CD4-positive, alpha-beta T cell (primary cell): ENCODE measurements at regions of chr11 and their contacts with region 1.

Region 1: GRCh38 chr11:62427630-62428233 is 8.9 kb downstream of the SCGB1A1 start:
- DNase-seq: peak in 3 of 14 experiments; percentile 22 to 56 (median 48)
- ATAC-seq: no peak
- H3K4me3 ChIP-seq: no peak overlapping the region
- H3K4me3 Mint-ChIP-seq: peak overlapping the region; percentile 38
- H3K27ac ChIP-seq: peak overlapping the region in 1 of 2 donors; percentile 24
- H3K27ac Mint-ChIP-seq: peak overlapping the region; percentile 35
- H3K4me1 ChIP-seq: peaks cover 34% of the 10 kb centered on the region
- H3K4me1 Mint-ChIP-seq: peaks cover 33% of the 10 kb centered on the region
- H3K27me3 ChIP-seq: no peaks in the 10 kb centered on the region
- H3K27me3 Mint-ChIP-seq: no peaks in the 10 kb centered on the region
- CTCF ChIP-seq: no peak

Region 2: DNA sequence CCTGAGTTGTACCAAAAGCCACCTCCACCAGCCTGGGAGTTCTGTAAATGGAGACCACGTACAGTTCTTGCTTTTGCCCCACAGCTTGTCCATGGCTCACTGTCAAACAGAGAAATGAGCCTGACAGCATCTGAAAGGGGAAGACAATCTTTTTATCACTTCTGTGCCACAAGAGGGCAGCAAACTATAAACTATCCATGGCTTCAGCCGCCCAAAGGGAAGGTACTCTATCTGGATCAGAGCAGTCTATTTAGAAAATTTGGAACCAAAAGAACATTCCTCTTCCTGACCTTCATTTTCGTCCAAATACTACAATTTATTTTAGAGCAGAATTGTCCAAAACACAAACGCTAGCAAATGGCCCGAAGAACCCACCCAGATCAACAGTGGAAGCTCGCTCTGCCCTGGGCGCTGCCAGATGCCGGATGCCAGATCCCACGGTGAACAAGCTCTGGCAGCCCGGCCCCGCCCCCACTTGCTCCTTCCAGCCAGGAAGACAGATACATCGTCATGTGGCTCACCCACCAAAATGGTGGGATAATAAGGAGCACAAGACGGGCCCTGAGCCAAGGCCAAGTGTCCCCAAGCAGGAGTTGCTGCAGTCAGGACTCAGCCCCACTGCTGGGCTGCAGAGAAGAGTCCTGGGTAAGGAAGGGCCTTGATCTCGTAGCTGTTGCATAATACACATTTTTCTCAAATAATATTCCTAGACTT is 32.8 kb before region 1 on chr11:
- CTCF ChIA-PET with region 1: interaction called, 16 read pairs
- POLR2A ChIA-PET with region 1: no interaction called
- intact Hi-C with region 1: no loop called
- DNase-seq: peak in 8 of 14 experiments; percentile 13 to 84 (median 53)
- ATAC-seq: peak; percentile 78
- H3K4me3 ChIP-seq: no peak overlapping the region
- H3K4me3 Mint-ChIP-seq: no peak overlapping the region
- H3K27ac ChIP-seq: no peak overlapping the region
- H3K27ac Mint-ChIP-seq: no peak overlapping the region
- H3K4me1 ChIP-seq: peaks cover 10% of the 10 kb centered on the region
- H3K4me1 Mint-ChIP-seq: peaks cover 18% of the 10 kb centered on the region
- H3K27me3 ChIP-seq: no peaks in the 10 kb centered on the region
- H3K27me3 Mint-ChIP-seq: no peaks in the 10 kb centered on the region
- CTCF ChIP-seq: peak; percentile 81

Region 3: DNA sequence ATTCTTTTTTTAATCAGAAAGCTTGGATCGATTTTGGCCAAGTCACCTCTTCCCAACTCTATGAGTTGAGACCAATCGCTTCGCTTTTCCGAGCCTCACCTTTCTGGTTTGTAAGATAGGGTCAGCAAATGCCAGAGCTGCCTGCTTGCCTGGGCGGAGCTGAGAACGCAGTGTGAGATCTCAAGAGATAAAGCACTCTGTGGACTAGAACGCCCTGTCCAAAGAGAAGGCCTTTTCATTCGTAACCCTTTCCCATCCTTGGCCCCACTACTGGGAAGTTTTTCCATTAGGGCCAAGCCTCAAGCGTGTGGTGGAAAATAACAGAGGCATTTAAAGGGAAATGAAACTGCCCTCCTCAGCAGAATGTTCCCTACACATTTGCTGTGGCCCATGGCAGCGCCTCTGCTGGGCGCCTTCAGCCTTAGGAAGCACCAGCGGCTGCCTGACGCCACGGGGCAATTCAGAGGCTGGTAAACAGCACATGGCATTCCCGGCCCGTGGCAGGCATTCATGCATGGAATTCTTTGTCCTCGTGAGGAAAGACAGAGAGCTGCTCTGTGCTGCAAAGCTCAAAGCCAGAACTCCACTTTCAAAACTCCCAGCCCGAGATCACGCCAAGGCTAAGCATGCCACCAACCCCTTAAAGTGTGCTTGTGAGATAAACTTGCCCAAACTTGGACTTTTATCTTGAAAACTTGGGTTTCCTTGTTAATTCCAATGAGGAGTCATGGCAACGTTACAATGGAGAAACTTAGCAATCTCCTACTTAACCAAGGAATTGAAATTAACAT is 80.7 kb after region 1 on chr11:
- CTCF ChIA-PET with region 1: interaction called, 12 read pairs
- POLR2A ChIA-PET with region 1: no interaction called
- intact Hi-C with region 1: no loop called
- DNase-seq: peak in 2 of 14 experiments; percentile 53 to 54
- ATAC-seq: no peak
- H3K4me3 ChIP-seq: no peak overlapping the region
- H3K4me3 Mint-ChIP-seq: no peak overlapping the region
- H3K27ac ChIP-seq: no peak overlapping the region
- H3K27ac Mint-ChIP-seq: no peak overlapping the region
- H3K4me1 ChIP-seq: no peaks in the 10 kb centered on the region
- H3K4me1 Mint-ChIP-seq: no peaks in the 10 kb centered on the region
- H3K27me3 ChIP-seq: no peaks in the 10 kb centered on the region
- H3K27me3 Mint-ChIP-seq: peaks cover 8% of the 10 kb centered on the region
- CTCF ChIP-seq: no peak

Region 4: GRCh38 chr11:62556108-62556871 is 128.6 kb after region 1 on chr11:
- CTCF ChIA-PET with region 1: interaction called, 92 read pairs
- POLR2A ChIA-PET with region 1: interaction called, 18 read pairs
- intact Hi-C with region 1: loop called (anchors 1 kb)
- DNase-seq: peak; percentile 72 to 94 (median 83)
- ATAC-seq: peak; percentile 46
- H3K4me3 ChIP-seq: peak overlapping the region; percentile 49
- H3K4me3 Mint-ChIP-seq: peak overlapping the region; percentile 84
- H3K27ac ChIP-seq: peak overlapping the region; percentile 96 to 97
- H3K27ac Mint-ChIP-seq: peak overlapping the region; percentile 95
- H3K4me1 ChIP-seq: peaks cover 95% of the 10 kb centered on the region
- H3K4me1 Mint-ChIP-seq: peaks cover 84% of the 10 kb centered on the region
- H3K27me3 ChIP-seq: no peaks in the 10 kb centered on the region
- H3K27me3 Mint-ChIP-seq: no peaks in the 10 kb centered on the region
- CTCF ChIP-seq: no peak

Region 5: DNA sequence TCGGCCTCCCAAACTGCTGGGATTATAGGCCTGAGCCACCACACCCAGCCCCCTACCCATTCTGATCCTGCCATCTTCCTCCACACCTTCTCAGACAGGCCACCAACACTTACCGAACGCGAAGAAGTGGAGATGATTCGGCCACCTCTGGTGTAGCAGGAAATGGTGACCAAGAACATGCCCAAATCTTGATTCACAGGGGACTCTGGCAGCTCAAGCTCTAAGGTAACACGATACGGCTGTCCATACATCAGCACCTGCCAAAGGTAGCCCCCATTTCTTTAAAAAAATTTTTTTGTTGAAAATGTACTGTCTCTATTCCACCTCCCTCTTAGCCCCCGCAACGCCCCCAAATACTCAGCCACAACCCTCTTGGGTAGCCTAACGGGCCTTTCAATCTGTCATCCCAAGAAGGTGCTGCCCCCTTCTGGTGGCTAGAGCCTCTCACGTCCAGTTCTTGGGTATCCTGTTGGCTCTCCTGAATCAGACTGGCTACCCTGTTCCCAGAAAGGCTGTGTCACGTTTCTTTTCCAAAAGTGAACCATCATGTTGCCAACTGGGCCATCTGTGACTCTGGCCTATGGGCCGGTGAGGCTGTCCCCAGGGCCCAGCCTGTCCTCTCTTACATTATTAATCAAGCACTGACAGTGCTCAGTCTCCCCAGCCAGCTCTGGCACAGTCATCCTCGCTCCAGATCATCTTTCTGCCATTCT is 266.9 kb after region 1 on chr11:
- CTCF ChIA-PET with region 1: interaction called, 14 read pairs
- POLR2A ChIA-PET with region 1: interaction called, 4 read pairs
- intact Hi-C with region 1: loop called (anchors 1 to 2 kb)
- DNase-seq: peak; percentile 65 to 89 (median 74)
- ATAC-seq: peak; percentile 93
- H3K4me3 ChIP-seq: no peak overlapping the region
- H3K4me3 Mint-ChIP-seq: no peak overlapping the region
- H3K27ac ChIP-seq: no peak overlapping the region
- H3K27ac Mint-ChIP-seq: no peak overlapping the region
- H3K4me1 ChIP-seq: peaks cover 4% of the 10 kb centered on the region
- H3K4me1 Mint-ChIP-seq: peaks cover 7% of the 10 kb centered on the region
- H3K27me3 ChIP-seq: no peaks in the 10 kb centered on the region
- H3K27me3 Mint-ChIP-seq: no peaks in the 10 kb centered on the region
- CTCF ChIP-seq: peak; percentile 89